ENCODE measurements at regions of chr1 and their contacts with region 1.

Region 1: DNA sequence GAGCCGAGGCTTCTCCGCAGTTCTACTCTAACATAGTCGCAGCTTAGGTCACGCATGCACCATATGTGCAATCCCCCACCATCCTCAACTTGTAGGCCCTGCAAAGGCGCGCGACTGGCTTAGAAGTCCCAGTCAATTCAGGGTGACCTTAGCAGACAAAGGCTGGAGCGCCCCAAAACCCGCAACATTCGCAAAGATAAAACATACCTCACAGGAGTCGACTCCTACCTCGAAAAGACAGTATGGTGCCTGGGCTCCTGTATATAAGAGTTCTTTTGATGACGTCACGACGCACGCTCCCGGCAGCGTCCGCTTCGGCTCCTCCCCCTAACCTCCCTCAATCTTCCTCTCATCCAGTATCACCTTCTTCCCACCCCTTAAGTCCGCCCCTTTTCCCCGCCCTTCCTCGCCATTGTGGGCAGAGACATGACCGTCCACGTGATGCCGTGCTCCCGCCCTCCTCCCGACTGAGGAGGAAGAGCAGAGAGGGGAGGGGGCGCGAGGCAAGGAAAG is at the start of gene GAS5:
- DNase-seq: peak; percentile 99 to 100
- H3K4me3 ChIP-seq: peak within 1 kb of the TSS; percentile 82
- H3K4me3 Mint-ChIP-seq: peak within 1 kb of the TSS; percentile 99
- H3K27ac Mint-ChIP-seq: peak within 1 kb of the TSS; percentile 100
- H3K4me1 ChIP-seq: peaks cover 13% of the 10 kb centered on the region; the same call in 1 of the 2 replicates
- H3K4me1 Mint-ChIP-seq: peaks cover 12% of the 10 kb centered on the region
- H3K27me3 ChIP-seq: no peaks in the 10 kb centered on the region
- H3K27me3 Mint-ChIP-seq: peaks cover 5% of the 10 kb centered on the region
- CTCF ChIP-seq: no peak
- total RNA-seq, gene GAS5: 559 and 641 TPM in 2 replicates

Region 2: GRCh38 chr1:173714759-173715537 is 152.9 kb before region 1 on chr1 and contains the start of gene KLHL20:
- CTCF ChIA-PET with region 1: no interaction called
- POLR2A ChIA-PET with region 1: interaction called, 10 read pairs
- intact Hi-C with region 1: no loop called
- DNase-seq: peak; percentile 90 to 91
- H3K4me3 ChIP-seq: peak within 1 kb of the TSS; percentile 90
- H3K4me3 Mint-ChIP-seq: peak within 1 kb of the TSS; percentile 79
- H3K27ac Mint-ChIP-seq: peak within 1 kb of the TSS; percentile 75
- H3K4me1 ChIP-seq: peaks cover 4% of the 10 kb centered on the region; the same call in 1 of the 2 replicates
- H3K4me1 Mint-ChIP-seq: peaks cover 7% of the 10 kb centered on the region
- H3K27me3 ChIP-seq: no peaks in the 10 kb centered on the region
- H3K27me3 Mint-ChIP-seq: no peaks in the 10 kb centered on the region
- CTCF ChIP-seq: no peak
- total RNA-seq, gene KLHL20: 11.7 and 12.8 TPM in 2 replicates

Region 3: DNA sequence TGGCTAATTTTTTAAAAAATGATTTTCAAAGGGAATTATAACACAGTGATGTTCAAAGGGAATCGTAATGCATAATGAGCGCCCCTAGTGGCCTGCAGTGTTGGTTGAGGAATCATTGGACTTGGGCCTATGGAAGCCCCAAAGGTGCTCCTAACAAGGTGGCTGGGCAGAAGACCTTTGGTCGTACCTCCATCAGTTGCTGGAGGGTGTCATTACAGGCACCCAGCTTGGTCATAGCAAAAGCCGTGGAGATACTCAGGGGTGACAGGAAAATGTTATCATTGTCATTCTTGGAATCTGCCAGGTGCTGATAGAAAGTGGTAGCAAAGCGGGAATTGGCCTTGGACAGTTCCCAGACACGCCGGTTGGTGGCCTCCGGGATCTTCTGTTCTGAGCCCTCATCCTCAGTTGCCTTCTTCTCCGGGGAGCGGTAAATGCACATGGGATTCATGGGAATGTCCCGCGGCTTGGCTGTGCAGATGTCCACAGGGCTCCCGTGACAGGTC is 46.6 kb after region 1 on chr1:
- CTCF ChIA-PET with region 1: no interaction called
- POLR2A ChIA-PET with region 1: no interaction called
- intact Hi-C with region 1: loop called (anchors 1 kb)
- DNase-seq: peak in 1 of 2 experiments; percentile 37
- H3K4me3 ChIP-seq: no peak overlapping the region
- H3K4me3 Mint-ChIP-seq: no peak overlapping the region
- H3K27ac Mint-ChIP-seq: no peak overlapping the region
- H3K4me1 ChIP-seq: 0 out of 2 replicates have a peak, but pooled peaks cover 7% of the 10 kb centered on the region
- H3K4me1 Mint-ChIP-seq: peaks cover 10% of the 10 kb centered on the region
- H3K27me3 ChIP-seq: no peaks in the 10 kb centered on the region
- H3K27me3 Mint-ChIP-seq: no peaks in the 10 kb centered on the region
- CTCF ChIP-seq: peak; percentile 38 to 41

Region 4: DNA sequence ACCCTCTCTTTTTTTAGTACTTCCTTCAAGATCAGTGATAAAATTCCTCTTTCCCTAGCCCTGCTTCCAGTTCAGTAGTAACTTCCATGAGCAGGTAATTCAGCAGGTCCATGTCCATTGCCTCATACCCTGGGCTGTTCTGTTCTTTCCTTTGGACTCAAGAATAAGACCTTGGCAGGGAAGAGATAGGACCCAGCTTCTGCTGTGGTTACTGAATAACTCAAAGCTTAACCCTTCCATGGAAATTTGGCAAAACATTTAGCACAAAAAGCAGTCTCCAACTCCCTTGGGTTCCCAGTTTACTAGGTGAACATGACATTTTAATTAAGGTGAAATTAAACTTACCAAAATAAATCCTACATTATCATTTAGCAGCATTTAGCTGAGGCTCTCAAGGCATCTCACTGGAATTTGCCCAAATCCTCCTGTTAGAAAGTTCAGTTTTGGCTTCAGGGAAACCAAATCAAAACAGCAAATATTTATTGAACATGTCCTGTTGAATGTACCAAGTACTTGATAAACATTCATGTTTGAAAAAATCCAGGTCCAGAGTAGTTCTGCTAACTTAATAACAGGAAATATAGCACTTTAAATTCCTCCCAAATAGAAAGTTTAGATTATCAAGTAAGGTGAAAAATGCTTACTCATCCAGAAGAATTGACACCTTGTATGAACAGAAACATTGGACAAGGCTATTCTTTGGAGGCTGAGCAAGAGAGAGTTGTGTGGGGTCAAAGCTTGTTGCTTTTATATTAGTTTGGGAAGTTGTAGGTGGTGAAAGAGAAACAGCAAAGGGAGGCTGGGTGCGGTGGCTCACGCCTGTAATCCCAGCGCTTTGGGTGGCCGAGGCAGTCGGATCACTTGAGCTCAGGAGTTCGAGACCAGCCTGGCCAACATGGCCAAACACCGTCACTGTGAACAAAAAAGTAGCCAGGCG is 57.8 kb after region 1 on chr1:
- CTCF ChIA-PET with region 1: no interaction called
- POLR2A ChIA-PET with region 1: no interaction called
- intact Hi-C with region 1: loop called (anchors 5 kb)
- DNase-seq: peak in 1 of 2 experiments; percentile 19
- H3K4me3 ChIP-seq: no peak overlapping the region
- H3K4me3 Mint-ChIP-seq: no peak overlapping the region
- H3K27ac Mint-ChIP-seq: peak overlapping the region; percentile 16
- H3K4me1 ChIP-seq: peaks cover 11% of the 10 kb centered on the region
- H3K4me1 Mint-ChIP-seq: peaks cover 7% of the 10 kb centered on the region
- H3K27me3 ChIP-seq: no peaks in the 10 kb centered on the region
- H3K27me3 Mint-ChIP-seq: no peaks in the 10 kb centered on the region
- CTCF ChIP-seq: no peak

Region 5: DNA sequence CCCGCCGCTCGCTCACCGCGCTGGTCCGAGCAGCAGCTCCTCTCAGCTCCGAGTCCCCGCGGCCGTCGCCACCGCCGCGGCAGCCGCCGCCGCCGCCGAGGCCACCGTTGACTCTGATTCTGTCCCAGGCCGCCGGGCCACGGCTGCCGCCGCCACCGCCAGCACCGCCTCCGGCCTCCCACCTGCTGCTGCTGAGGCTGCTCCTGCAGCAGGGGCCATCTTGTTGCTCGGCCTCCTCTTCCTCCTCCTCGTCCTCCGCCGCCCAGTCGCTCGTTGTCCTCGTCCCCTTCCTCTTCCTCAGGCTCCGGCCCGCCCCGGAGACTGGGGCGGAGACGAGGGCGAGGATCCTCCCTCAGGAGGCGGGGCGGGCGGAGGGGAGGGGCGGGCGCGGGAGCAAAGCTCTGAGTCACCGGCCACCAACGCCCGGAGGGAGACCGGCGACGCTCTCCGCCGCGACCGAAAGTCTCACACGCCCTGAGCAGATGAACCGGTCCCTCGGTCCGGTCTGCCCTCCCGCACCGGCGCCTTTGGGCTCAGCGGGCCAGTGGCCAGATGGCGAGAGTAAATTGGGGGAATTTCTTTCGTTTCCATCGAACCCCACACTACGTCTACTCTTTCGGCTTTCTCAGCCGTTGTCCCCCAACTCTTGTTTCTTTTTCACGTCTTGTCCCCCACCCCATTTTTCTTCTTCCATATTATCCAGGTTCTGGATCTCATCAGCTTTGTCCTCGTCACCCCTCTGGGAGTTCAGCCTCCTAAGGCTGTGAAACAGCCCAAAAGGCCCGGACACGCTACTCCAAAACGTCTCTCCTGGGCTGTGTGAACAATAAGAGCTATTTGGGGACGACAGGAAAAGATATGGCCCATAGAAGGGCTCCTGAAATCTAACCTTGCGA is 154.5 kb after region 1 on chr1 and contains the start of gene RC3H1:
- CTCF ChIA-PET with region 1: no interaction called
- POLR2A ChIA-PET with region 1: interaction called, 17 read pairs
- intact Hi-C with region 1: loop called (anchors 2 kb)
- DNase-seq: peak; percentile 88
- H3K4me3 ChIP-seq: peak within 1 kb of the TSS; percentile 83
- H3K4me3 Mint-ChIP-seq: peak within 1 kb of the TSS; percentile 84
- H3K27ac Mint-ChIP-seq: peak within 1 kb of the TSS; percentile 97
- H3K4me1 ChIP-seq: peaks cover 14% of the 10 kb centered on the region
- H3K4me1 Mint-ChIP-seq: peaks cover 7% of the 10 kb centered on the region
- H3K27me3 ChIP-seq: no peaks in the 10 kb centered on the region
- H3K27me3 Mint-ChIP-seq: no peaks in the 10 kb centered on the region
- CTCF ChIP-seq: no peak
- total RNA-seq, gene RC3H1: 29.2 and 36.3 TPM in 2 replicates

Measured in Caco-2 (cell line).